Heart right ventricle (tissue), 16 donors: ENCODE measurements at regions of chr19 and their contacts with region 1.

Region 1: GRCh38 chr19:37114020-37114419 is 35.8 kb downstream of the ZNF420 start:
- DNase-seq: no peak
- ATAC-seq: no peak
- H3K4me3 ChIP-seq: no peak overlapping the region
- H3K27ac ChIP-seq: no peak overlapping the region
- H3K4me1 ChIP-seq: no peaks in the 10 kb centered on the region
- H3K27me3 ChIP-seq: no peaks in the 10 kb centered on the region
- CTCF ChIP-seq: peak in 1 of 9 donors; percentile 19

Region 2: DNA sequence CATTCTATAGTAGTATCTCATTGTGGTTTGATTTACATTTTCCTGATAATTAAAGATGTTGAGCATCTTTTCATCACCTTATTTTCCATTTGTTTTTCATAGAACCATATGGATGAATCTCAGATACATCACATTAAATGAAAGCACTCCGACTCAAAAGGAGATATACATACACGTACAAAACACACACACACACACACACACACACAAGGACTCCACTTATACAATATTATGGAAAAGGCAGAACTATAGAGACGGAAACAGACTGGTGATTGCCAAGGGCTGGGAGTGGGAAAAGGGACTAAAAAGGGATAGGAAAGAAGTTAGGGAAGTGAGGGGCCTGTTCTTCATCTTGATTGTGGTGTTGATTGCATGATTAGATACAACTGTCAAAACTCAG is 34.2 kb after region 1 on chr19:
- intact Hi-C with region 1: loop called in 1 of 10 experiments (anchors 10 kb)
- DNase-seq: no peak
- ATAC-seq: no peak
- H3K4me3 ChIP-seq: no peak overlapping the region
- H3K27ac ChIP-seq: no peak overlapping the region
- H3K4me1 ChIP-seq: no peaks in the 10 kb centered on the region
- H3K27me3 ChIP-seq: no peaks in the 10 kb centered on the region
- CTCF ChIP-seq: no peak